Activated T-helper 1 cell treated with anti-CD3 and anti-CD28 coated beads, Interleukin-12 subunit alpha, Interleukin-12 subunit beta, Interleukin-2, Interleukin-4 antibody, amounts not matched to agents 30 ng/mL and 10 ng/mL and 1 ng/mL, durations not matched to agents 14 hours and 24 hours and 36 hours (primary cell): ENCODE measurements at regions of chr13 and their contacts with region 1.

Region 1: DNA sequence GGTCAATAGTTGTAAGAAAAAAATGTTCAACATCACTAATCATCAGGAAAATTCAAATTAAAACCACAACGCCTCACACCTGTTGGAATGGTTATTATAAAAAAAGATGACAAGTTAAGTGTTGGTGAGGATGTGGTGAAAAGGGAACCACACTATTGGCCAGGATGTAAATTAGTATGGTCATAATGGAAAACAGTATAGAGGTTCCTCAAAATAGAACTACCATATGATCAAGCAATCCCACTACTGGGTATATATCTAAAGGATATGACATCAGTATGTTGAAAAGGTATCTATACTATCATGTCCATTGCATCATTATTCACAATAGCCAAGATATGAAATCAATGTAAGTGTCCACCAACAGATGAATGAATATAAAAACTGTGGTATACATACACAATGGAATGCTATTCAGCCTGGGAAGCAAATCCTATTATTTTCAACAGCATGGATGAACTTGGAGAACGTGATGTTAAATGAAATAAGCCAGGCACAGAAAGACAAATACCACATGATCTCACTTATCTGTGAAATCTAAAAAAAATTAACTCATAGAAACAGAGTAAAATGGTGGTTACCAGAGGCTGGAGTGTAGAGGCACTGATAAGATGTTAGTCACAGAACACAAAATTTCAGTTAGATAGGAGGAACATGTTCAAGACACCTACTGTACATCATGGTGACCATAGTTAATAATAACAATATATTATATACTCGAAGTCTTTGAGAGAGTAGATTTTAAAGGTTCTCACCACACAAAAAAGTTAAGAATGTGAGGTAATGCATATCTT is 56.6 kb downstream of the TBC1D4 start:
- DNase-seq: no peak
- H3K4me3 Mint-ChIP-seq: no peak overlapping the region
- H3K27ac Mint-ChIP-seq: no peak overlapping the region
- H3K4me1 Mint-ChIP-seq: peaks cover 5% of the 10 kb centered on the region
- H3K27me3 Mint-ChIP-seq: peaks cover 6% of the 10 kb centered on the region

Region 2: GRCh38 chr13:74074723-74075122 is 1350.7 kb before region 1 on chr13:
- intact Hi-C with region 1: no loop called
- DNase-seq: no peak
- H3K4me3 Mint-ChIP-seq: no peak overlapping the region
- H3K27ac Mint-ChIP-seq: no peak overlapping the region
- H3K4me1 Mint-ChIP-seq: peaks cover 18% of the 10 kb centered on the region
- H3K27me3 Mint-ChIP-seq: no peaks in the 10 kb centered on the region

Region 3: GRCh38 chr13:75372517-75372916 is 52.9 kb before region 1 on chr13:
- intact Hi-C with region 1: loop called (anchors 5 kb)
- DNase-seq: no peak
- H3K4me3 Mint-ChIP-seq: no peak overlapping the region
- H3K27ac Mint-ChIP-seq: no peak overlapping the region
- H3K4me1 Mint-ChIP-seq: peaks cover 12% of the 10 kb centered on the region
- H3K27me3 Mint-ChIP-seq: no peaks in the 10 kb centered on the region

Region 4: GRCh38 chr13:75566658-75567057 is 141.2 kb after region 1 on chr13:
- intact Hi-C with region 1: no loop called
- DNase-seq: no peak
- H3K4me3 Mint-ChIP-seq: no peak overlapping the region
- H3K27ac Mint-ChIP-seq: no peak overlapping the region
- H3K4me1 Mint-ChIP-seq: no peaks in the 10 kb centered on the region
- H3K27me3 Mint-ChIP-seq: no peaks in the 10 kb centered on the region